ENCODE measurements at regions of chr1 and their contacts with region 1.

Region 1: GRCh38 chr1:32072622-32073298 is at the start of gene TMEM39B:
- DNase-seq: peak; percentile 72
- ATAC-seq: peak; percentile 92
- H3K4me3 ChIP-seq: peak within 1 kb of the TSS; percentile 92
- H3K27ac ChIP-seq: peak within 1 kb of the TSS; percentile 70
- H3K4me1 ChIP-seq: peaks cover 13% of the 10 kb centered on the region
- H3K27me3 ChIP-seq: no peaks in the 10 kb centered on the region
- CTCF ChIP-seq: no peak
- EP300 ChIP-seq: peak in 1 of 2 experiments; percentile 45; a peak in 2 of 4 replicates
- POLR2A ChIP-seq: peak; percentile 96
- RAD21 ChIP-seq: no peak
- polyA plus RNA-seq, gene TMEM39B: 2.3 to 3.4 TPM

Region 2: GRCh38 chr1:32013386-32014198 is 59.2 kb before region 1 on chr1 and contains the start of gene KHDRBS1:
- CTCF ChIA-PET with region 1: interaction called, 4 read pairs
- POLR2A ChIA-PET with region 1: interaction called, 10 read pairs
- RAD21 ChIA-PET with region 1: interaction called, 11 read pairs
- SMC1A ChIA-PET with region 1: interaction called, 8 read pairs
- in situ Hi-C with region 1: no loop called
- intact Hi-C with region 1: no loop called
- DNase-seq: peak; percentile 98
- ATAC-seq: peak; percentile 87
- H3K4me3 ChIP-seq: peak within 1 kb of the TSS; percentile 99
- H3K27ac ChIP-seq: peak within 1 kb of the TSS; percentile 94
- H3K4me1 ChIP-seq: 0 out of 2 replicates have a peak, but pooled peaks cover 4% of the 10 kb centered on the region
- H3K27me3 ChIP-seq: no peaks in the 10 kb centered on the region
- CTCF ChIP-seq: no peak
- EP300 ChIP-seq: 0 out of 4 replicates have a peak, but pooled peaks of 1 of the 2 experiments have one; percentile 29
- POLR2A ChIP-seq: peak; percentile 95
- RAD21 ChIP-seq: no peak
- polyA plus RNA-seq, gene KHDRBS1: 42.5 to 97.6 TPM

Region 3: GRCh38 chr1:32179443-32180185 is 106.9 kb after region 1 on chr1 and contains the start of gene TXLNA:
- CTCF ChIA-PET with region 1: interaction called, 7 read pairs
- POLR2A ChIA-PET with region 1: interaction called, 13 read pairs
- RAD21 ChIA-PET with region 1: interaction called, 12 read pairs
- SMC1A ChIA-PET with region 1: interaction called, 3 read pairs
- in situ Hi-C with region 1: no loop called
- intact Hi-C with region 1: no loop called
- DNase-seq: peak; percentile 60
- ATAC-seq: peak; percentile 93
- H3K4me3 ChIP-seq: peak within 1 kb of the TSS; percentile 89
- H3K27ac ChIP-seq: peak within 1 kb of the TSS; percentile 85
- H3K4me1 ChIP-seq: peaks cover 17% of the 10 kb centered on the region
- H3K27me3 ChIP-seq: no peaks in the 10 kb centered on the region
- CTCF ChIP-seq: no peak
- EP300 ChIP-seq: peak in 1 of 2 experiments; percentile 33; a peak in 1 of 4 replicates
- POLR2A ChIP-seq: peak; percentile 99
- RAD21 ChIP-seq: no peak
- polyA plus RNA-seq, gene TXLNA: 7.2 to 10.3 TPM